B cell (primary cell): ENCODE measurements at regions of chr7 and their contacts with region 1.

Region 1: GRCh38 chr7:2248984-2249694 is 7.1 kb downstream of the NUDT1 start:
- DNase-seq: peak; percentile 49
- ATAC-seq: peak; percentile 7
- H3K4me3 ChIP-seq: no peak overlapping the region
- H3K4me3 Mint-ChIP-seq: no peak overlapping the region
- H3K27ac ChIP-seq: peak overlapping the region in 1 of 2 donors; percentile 33
- H3K27ac Mint-ChIP-seq: peak overlapping the region; percentile 75
- H3K4me1 ChIP-seq: peaks cover 26 to 55% of the 10 kb centered on the region in 2 donors
- H3K4me1 Mint-ChIP-seq: peaks cover 49% of the 10 kb centered on the region
- H3K27me3 ChIP-seq: no peaks in the 10 kb centered on the region
- H3K27me3 Mint-ChIP-seq: no peaks in the 10 kb centered on the region
- CTCF ChIP-seq: no peak

Region 2: GRCh38 chr7:2307611-2308107 is 58.5 kb after region 1 on chr7:
- CTCF ChIA-PET with region 1: interaction called, 4 read pairs
- POLR2A ChIA-PET with region 1: interaction called, 12 read pairs
- intact Hi-C with region 1: no loop called
- DNase-seq: peak; percentile 87
- ATAC-seq: peak; percentile 61
- H3K4me3 ChIP-seq: peak overlapping the region; percentile 38 to 80 (median 48)
- H3K4me3 Mint-ChIP-seq: peak overlapping the region; percentile 87
- H3K27ac ChIP-seq: peak overlapping the region; percentile 69 to 75
- H3K27ac Mint-ChIP-seq: peak overlapping the region; percentile 91
- H3K4me1 ChIP-seq: peaks cover 60 to 73% of the 10 kb centered on the region in 2 donors
- H3K4me1 Mint-ChIP-seq: peaks cover 56% of the 10 kb centered on the region
- H3K27me3 ChIP-seq: no peaks in the 10 kb centered on the region
- H3K27me3 Mint-ChIP-seq: no peaks in the 10 kb centered on the region
- CTCF ChIP-seq: no peak